Posterior vena cava (tissue), 2 donors: ENCODE measurements at regions of chr1 and their contacts with region 1.

Region 1: GRCh38 chr1:16243936-16244649 is 7.1 kb upstream of the CPLANE2 start:
- DNase-seq: peak; percentile 92

Region 2: DNA sequence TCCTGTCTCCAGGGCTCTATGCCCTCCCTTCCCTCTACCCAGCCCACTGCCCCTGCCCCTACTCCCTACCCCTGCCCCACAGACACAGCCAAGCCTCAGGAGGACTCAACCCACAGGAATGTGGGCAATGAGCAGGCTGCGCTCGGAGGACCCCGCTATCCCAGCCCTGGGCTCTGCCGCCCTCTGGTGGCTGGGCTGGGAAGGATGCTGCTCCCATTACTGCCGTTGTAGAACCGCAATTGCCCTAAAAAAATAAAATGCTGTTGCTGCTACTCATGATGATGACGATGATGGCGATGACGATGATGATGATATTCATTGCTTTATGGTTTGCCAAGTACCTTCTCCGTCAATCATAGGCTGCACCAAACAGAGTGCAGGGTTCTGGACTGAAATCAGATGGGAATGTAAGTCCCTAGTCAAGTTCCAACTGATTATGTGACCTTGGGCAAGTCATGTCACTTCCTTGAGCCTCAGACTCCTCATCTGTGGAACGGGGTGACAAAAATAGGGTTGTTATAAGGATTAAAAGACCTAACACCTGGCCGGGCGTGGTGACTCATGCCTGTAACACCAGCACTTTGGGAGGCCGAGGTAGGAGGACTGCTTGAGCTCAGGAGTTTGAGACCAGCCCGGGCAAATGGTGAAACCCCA is 56.2 kb before region 1 on chr1:
- intact Hi-C with region 1: loop called (anchors 2 to 5 kb)
- DNase-seq: peak; percentile 91

Region 3: DNA sequence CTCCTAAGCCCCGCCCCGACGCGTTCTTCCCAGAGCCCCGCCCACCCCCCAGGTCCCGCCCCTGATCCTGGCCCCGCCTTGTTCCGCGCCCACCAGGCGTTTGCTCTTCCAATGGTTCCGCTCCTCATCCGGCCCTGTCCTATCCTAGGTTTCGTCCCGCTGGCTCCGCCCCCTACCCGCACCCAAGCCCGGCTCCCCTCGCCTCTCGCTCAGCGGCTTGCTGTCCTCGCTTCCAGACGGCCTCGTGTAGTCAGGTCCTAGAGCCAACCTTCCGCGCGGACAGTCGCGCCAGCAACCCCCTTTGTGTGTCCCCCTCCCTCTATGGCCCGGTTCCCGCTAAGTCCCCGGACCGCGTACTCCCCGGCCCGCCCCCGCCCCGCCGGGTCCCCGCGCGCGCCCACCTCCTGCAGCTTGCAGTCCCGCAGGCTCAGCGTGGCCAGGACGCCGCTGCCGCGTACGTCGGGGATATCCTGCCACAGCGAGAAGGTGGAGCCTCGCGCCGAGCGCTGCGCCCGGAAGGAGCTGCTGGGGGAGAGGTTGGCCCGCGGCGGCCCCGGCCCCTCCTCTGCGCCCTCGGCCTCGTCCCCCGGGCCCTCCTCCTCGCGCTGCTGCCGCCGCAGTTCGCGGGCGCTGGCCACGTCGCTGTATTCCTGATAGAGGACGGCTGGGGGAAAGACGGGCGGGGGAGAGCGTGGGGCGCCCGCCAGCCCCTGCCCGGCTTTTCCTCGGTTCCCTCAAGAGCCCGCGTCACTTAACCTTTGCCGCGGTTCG is 37.4 kb before region 1 on chr1:
- intact Hi-C with region 1: loop called in 1 of 2 experiments (anchors 5 kb)
- DNase-seq: peak; percentile 99

Region 4: DNA sequence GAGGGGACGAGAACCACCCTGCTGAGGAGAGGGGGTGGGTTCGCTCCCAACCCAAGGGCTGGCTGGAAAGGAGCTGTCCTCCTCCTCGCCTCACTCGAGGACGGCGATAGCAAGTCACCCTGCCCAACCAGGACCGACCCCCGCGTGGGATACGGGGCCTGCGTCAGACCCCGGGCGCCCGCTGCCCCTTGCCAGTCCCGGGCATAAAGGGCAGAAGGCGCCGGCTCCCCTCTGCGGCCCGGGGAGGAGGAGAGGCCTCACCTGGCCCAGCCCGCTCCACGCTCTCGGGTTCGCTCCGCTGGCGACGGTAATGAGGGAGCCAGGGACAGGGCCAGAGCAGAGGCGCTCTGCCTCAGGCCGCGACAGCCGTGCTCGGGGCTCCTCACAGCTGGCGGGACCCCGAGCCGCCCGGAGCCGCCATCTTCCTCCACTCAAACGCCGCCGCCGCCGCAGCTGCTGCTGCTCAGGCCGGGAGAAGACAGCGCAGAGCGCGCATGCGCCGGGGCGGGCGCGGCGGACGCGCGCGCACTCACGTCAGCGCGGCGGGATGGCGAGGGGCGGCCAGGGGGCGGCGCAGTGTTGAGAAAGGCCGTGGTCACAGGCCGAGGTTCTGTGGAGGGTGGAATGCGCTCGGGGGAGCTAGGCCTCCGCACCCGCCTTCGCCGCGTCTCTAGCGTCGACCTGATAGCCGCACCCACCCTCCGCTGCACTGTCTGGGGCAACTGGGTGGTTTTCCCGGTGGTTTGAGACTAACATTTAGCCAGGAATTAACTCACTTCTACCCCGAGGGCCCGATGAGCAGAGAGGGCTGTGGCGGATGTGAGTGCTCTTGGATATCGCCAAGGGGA is 108.1 kb after region 1 on chr1 and contains the start of gene FBXO42:
- intact Hi-C with region 1: loop called (anchors 10 kb)
- DNase-seq: peak; percentile 97
- total RNA-seq, gene FBXO42: 17.8 to 20.8 TPM